H1 (cell line): ENCODE measurements at regions of chr7 and their contacts with region 1.

Region 1: DNA sequence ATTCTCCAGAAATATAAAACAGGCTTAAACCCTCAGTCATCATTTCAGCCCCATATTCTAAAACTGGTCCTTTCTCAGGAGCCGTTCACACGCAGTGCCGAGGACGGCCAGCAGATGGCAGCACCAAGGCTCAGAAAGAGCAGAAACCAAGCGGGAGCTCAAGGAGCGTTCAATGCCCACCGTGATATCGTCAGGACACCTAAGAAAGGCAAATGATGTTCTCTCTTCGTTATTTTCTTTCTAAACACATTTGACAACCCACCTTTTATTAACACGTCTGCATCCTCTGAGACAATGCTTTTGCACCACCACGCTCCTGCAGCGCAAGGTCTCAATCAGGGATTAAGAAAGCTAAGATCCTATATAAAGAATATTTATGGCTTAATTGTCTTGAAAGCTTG is 45.7 kb upstream of the RBM33 start:
- DNase-seq: peak; percentile 38 to 99
- H3K4me3 ChIP-seq: peak overlapping the region in 1 of 4 experiments; percentile 26; a peak in 1 of 8 replicates
- H3K27ac ChIP-seq: no peak overlapping the region
- H3K4me1 ChIP-seq: peaks cover 4 to 10% (median 5%) of the 10 kb centered on the region in 4 experiments; a peak in 6 of 7 replicates
- H3K27me3 ChIP-seq: no peaks in the 10 kb centered on the region
- CTCF ChIP-seq: peak; percentile 89 to 96 (median 92)
- EP300 ChIP-seq: no peak
- POLR2A ChIP-seq: no peak
- RAD21 ChIP-seq: peak; percentile 85 to 86

Region 2: GRCh38 chr7:155438777-155439176 is 160.0 kb before region 1 on chr7:
- CTCF ChIA-PET with region 1: no interaction called
- POLR2A ChIA-PET with region 1: no interaction called
- DNase-seq: no peak
- H3K4me3 ChIP-seq: no peak overlapping the region
- H3K27ac ChIP-seq: no peak overlapping the region
- H3K4me1 ChIP-seq: no peaks in the 10 kb centered on the region
- H3K27me3 ChIP-seq: peaks cover 0 to 4% (median 1%) of the 10 kb centered on the region in 4 experiments; a peak in 4 of 7 replicates
- CTCF ChIP-seq: no peak
- EP300 ChIP-seq: no peak
- POLR2A ChIP-seq: no peak
- RAD21 ChIP-seq: no peak

Region 3: DNA sequence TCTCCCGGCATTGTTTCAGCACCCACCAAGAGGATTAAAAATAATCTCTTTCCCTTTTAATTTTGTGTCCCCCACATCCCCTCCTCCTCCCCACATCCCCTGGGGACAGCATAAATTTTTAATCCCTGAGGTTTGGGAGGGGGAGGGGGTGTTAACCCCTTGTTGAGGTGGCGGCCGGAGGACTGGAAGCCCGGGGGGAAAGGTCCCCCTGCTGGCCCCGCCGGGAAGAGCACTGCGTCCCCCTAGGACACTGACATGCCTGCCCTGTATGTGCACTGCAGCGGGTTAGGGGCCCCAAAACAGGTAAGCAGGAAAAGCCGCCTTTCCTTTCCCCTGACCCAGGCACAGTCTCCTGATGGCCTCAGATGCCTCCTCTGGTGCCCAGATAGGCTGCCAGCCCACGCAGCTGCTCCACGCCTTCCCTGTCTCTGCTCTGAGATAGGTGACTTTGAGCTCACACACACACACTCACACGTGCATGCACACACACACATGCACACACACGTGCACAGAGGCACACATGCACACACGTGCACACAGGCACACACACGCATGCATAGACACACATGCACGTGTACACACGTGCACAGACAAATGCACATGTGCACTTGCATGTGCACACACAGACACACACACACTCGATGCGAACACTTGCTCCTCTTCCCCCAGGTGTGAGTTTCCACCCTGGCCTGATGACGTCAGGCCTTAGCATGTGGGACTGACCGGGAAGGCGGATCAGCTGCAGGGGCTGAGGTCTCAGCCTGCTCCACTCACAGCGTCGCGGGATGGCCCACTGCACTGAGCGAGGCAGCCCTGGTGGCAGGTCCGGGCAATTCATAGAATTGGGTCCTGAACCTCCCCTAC is 64.8 kb before region 1 on chr7:
- CTCF ChIA-PET with region 1: interaction called, 13 read pairs
- POLR2A ChIA-PET with region 1: no interaction called
- DNase-seq: peak; percentile 23 to 89
- H3K4me3 ChIP-seq: peak overlapping the region; percentile 17 to 55 (median 26); a peak in 4 of 8 replicates
- H3K27ac ChIP-seq: no peak overlapping the region
- H3K4me1 ChIP-seq: peaks cover 0 to 8% (median 7%) of the 10 kb centered on the region in 4 experiments; a peak in 5 of 7 replicates
- H3K27me3 ChIP-seq: peaks cover 29 to 68% (median 57%) of the 10 kb centered on the region in 4 experiments
- CTCF ChIP-seq: peak; percentile 79 to 91 (median 87)
- EP300 ChIP-seq: no peak
- POLR2A ChIP-seq: no peak
- RAD21 ChIP-seq: peak; percentile 70 to 83

Region 4: GRCh38 chr7:155543011-155543876 is 55.6 kb before region 1 on chr7:
- CTCF ChIA-PET with region 1: interaction called, 12 read pairs
- POLR2A ChIA-PET with region 1: no interaction called
- DNase-seq: no peak
- H3K4me3 ChIP-seq: no peak overlapping the region
- H3K27ac ChIP-seq: no peak overlapping the region
- H3K4me1 ChIP-seq: 0 out of 7 replicates have a peak, but pooled peaks cover 0 to 2% (median 0%) of the 10 kb centered on the region in 4 experiments
- H3K27me3 ChIP-seq: peaks cover 0 to 9% (median under 1%) of the 10 kb centered on the region in 4 experiments; a peak in 2 of 7 replicates
- CTCF ChIP-seq: peak in 2 of 3 experiments; percentile 36 to 40; a peak in 2 of 4 replicates
- EP300 ChIP-seq: no peak
- POLR2A ChIP-seq: no peak
- RAD21 ChIP-seq: peak; percentile 48 to 56; a peak in 3 of 4 replicates

Region 5: GRCh38 chr7:155610633-155611193 is 11.9 kb after region 1 on chr7:
- CTCF ChIA-PET with region 1: interaction called, 22 read pairs
- POLR2A ChIA-PET with region 1: no interaction called
- DNase-seq: peak in 1 of 2 experiments; percentile 41
- H3K4me3 ChIP-seq: no peak overlapping the region
- H3K27ac ChIP-seq: no peak overlapping the region
- H3K4me1 ChIP-seq: peaks cover 0 to 2% (median 0%) of the 10 kb centered on the region in 4 experiments; a peak in 1 of 7 replicates
- H3K27me3 ChIP-seq: no peaks in the 10 kb centered on the region
- CTCF ChIP-seq: no peak
- EP300 ChIP-seq: no peak
- POLR2A ChIP-seq: no peak
- RAD21 ChIP-seq: no peak

Region 6: GRCh38 chr7:155766966-155767916 is 168.4 kb after region 1 on chr7:
- CTCF ChIA-PET with region 1: interaction called, 22 read pairs
- POLR2A ChIA-PET with region 1: no interaction called
- DNase-seq: no peak
- H3K4me3 ChIP-seq: no peak overlapping the region
- H3K27ac ChIP-seq: no peak overlapping the region
- H3K4me1 ChIP-seq: peaks cover 0 to 2% (median 0%) of the 10 kb centered on the region in 4 experiments; a peak in 2 of 7 replicates
- H3K27me3 ChIP-seq: no peaks in the 10 kb centered on the region
- CTCF ChIP-seq: no peak
- EP300 ChIP-seq: no peak
- POLR2A ChIP-seq: no peak
- RAD21 ChIP-seq: no peak